Posterior vena cava (tissue), 2 donors: ENCODE measurements at regions of chr4 and their contacts with region 1.

Region 1: DNA sequence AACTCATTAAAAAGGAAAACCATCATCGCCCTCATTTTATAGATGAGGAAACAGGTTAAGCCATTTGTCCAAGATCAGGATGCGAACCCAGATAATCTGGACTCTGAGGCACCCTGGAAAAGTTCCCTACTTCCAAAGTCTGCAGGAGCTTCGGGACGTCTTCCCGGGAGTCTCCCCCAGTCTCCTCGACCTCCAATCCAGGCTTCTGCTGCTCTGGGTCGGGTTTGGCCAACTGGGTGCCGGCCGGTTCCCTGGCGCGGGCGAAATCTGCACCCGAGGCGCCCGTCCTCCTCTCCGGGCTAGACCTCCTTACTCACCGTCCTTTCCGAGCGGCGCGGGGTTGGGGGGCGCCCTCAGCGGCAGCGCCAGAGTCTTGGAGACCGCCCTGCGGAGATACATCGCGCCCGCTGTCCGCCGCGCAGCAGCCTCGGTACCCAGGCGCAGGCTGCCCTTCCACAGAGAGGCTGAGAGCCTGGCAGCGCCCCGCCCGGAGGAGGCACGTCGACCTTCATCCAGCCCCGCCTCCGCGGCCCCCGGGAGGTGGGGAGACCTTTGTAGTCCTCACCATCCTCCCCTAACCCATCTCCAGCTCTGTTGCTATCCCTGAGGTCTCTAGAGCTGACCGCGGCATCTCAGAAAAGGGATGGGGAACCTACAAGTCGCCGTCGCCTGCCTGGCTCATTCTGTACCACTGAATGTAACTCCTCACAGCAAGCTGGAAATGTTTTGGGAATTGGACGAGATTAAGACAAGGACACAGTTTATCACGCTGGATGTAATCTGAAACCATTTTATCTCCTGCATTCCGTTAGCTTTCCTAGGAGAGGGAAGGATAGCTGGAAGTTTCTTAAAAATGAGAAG is at the start of gene MGARP:
- DNase-seq: peak; percentile 84
- total RNA-seq, gene MGARP: 2.1 to 4.2 TPM

Region 2: GRCh38 chr4:139108567-139109128 is 171.3 kb before region 1 on chr4:
- intact Hi-C with region 1: loop called in 1 of 2 experiments (anchors 10 kb)
- DNase-seq: no peak